Mammary epithelial cell (primary cell): ENCODE measurements at regions of chr7 and their contacts with region 1.

Region 1: DNA sequence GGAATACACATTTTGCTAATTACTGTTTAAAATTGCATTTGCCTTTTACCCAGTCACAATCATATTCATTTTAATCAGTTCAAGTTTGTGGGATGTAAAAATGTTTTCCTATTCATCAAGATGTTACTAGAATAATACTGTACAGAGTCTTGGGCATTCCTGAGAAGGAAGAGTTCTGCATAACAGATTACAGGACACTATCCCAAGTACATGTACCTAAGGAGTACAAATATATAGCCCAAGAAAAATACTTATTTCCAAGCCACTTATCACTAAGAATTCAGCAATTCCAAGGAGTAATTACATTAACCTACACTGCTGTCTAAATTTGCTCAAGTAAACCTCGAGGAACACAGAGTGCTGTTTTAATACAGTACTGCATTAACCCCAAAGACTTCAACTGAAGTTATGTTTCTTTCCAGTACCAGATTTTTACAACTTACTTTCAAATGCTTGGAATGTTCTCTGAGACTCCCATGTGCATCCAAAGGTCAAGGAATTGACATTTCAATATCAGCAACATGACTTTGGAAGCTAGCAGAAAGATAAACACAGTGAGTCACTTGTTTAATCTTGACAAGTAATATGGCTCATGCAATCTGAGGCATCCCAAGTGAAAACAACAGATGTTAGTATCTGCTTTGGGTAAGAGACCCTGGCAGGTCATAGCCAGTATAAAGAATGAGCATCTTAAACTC is 125.4 kb upstream of the BET1 start:
- DNase-seq: peak; percentile 3
- H3K4me3 ChIP-seq: no peak overlapping the region
- H3K27ac ChIP-seq: no peak overlapping the region
- H3K4me1 ChIP-seq: no peaks in the 10 kb centered on the region
- H3K27me3 ChIP-seq: peaks cover 10% of the 10 kb centered on the region
- CTCF ChIP-seq: no peak

Region 2: DNA sequence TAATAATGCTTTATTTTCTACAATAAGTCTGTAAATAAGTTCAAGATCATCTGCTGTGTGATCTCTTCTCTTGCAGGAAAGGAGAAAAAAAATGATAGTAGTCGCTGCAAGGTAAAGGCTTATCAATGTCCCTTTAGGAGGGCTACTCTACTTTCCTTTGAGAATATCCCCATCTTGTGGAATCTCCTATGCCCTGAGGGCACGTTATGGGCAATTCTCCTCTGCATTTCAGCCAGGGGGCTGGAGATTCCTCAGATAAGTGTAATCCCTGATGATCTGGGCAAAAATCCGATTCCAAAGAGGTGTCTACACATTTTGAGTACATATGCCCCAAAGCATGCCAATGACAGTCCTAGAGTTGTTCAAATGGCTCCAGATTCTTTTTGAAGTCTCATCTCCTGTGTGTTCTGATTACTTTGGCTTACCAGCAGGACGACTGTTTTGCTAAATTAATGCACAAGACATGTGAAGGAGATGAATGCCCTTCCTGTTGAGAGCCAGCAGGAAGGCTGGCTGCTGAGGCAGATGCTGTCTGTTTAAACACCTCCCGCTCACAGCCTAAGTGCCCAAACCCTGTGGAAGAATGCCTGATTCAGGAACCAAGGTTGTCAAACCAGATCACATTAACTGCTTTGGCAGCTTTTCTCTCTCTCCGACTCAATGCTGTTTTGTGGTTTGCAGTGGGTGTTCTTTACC is 93.9 kb after region 1 on chr7:
- CTCF ChIA-PET with region 1: no interaction called
- dilution Hi-C with region 1: no loop called
- in situ Hi-C with region 1: no loop called
- intact Hi-C with region 1: loop called (anchors 10 kb)
- DNase-seq: peak; percentile 67
- H3K4me3 ChIP-seq: no peak overlapping the region
- H3K27ac ChIP-seq: no peak overlapping the region
- H3K4me1 ChIP-seq: peaks cover 6% of the 10 kb centered on the region
- H3K27me3 ChIP-seq: no peaks in the 10 kb centered on the region
- CTCF ChIP-seq: peak in 1 of 2 donors; percentile 8

Region 3: DNA sequence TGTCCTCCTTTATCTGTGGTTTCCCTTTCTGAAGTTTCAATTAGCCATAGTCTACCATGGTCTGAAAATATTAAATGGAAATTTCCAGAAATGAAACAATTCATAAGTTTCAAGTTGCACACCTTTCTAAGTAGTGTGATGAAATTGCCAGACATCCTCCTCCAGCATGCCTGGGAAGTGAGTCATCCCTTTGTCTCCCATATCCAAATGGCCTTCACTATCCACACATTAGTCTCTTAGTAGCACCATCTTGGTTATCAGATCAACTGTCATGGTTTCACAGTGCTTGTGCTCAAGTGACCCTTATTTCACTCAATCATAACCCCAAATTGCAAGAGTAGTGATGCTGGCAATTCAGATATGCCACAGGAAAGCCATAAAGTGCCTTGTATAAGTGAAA is 694.4 kb after region 1 on chr7:
- CTCF ChIA-PET with region 1: no interaction called
- dilution Hi-C with region 1: no loop called
- in situ Hi-C with region 1: no loop called
- intact Hi-C with region 1: no loop called
- DNase-seq: peak; percentile 74
- H3K4me3 ChIP-seq: no peak overlapping the region
- H3K27ac ChIP-seq: no peak overlapping the region
- H3K4me1 ChIP-seq: peaks cover 4% of the 10 kb centered on the region
- H3K27me3 ChIP-seq: no peaks in the 10 kb centered on the region
- CTCF ChIP-seq: no peak